ENCODE measurements at regions of chr1 and their contacts with region 1.

Region 1: DNA sequence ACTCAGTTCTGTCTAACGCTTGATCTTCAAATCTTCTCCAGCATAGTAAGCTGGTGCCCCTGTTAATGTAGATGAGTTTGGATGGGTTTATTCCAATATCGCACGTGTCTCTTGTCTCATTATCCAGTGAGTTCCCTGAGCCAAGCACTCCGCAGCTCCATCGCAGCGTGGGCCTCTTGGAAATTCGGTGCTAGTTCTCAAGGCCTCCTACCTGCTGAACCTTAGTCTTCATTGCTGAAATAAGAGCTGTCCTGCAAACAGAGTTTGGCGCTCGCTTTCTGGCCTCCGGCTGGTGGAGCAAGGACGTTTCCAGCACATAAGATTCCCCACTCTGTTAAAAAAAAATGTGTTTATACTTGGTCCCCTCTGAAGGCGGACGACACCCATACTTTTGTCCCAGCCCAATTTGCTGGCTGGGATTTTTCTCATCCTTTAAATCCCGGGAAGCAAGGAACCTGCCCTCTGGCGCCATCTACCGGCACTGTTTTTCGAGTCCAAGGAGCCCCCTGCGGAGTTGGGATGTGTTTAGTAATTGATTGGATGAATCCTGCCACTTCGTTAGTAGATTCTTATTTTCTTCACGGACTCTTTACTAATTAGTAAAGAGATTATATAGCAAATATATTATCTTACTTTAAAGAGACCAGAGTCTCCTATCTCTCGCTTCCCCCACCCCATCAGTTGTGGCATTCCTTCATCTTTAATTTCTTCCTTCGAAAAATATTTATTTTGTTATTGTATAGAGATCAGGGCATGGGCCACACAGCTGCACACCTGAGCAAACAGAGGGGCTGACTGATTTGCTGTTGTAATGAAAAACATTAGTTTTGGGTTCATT is 14.7 kb downstream of the JUN start:
- DNase-seq: peak in 1 of 2 experiments; percentile 98
- H3K4me3 ChIP-seq: no peak overlapping the region
- H3K27ac ChIP-seq: no peak overlapping the region
- H3K4me1 ChIP-seq: peaks cover 0 to 3% (median under 1%) of the 10 kb centered on the region in 4 experiments; a peak in 1 of 7 replicates
- H3K27me3 ChIP-seq: no peaks in the 10 kb centered on the region
- CTCF ChIP-seq: peak; percentile 75 to 77 (median 75)
- EP300 ChIP-seq: no peak
- POLR2A ChIP-seq: no peak
- RAD21 ChIP-seq: peak; percentile 74 to 82

Region 2: GRCh38 chr1:58652651-58653184 is 116.5 kb before region 1 on chr1:
- CTCF ChIA-PET with region 1: no interaction called
- POLR2A ChIA-PET with region 1: no interaction called
- DNase-seq: no peak
- H3K4me3 ChIP-seq: no peak overlapping the region
- H3K27ac ChIP-seq: no peak overlapping the region
- H3K4me1 ChIP-seq: 0 out of 7 replicates have a peak, but pooled peaks cover 0 to 3% (median 0%) of the 10 kb centered on the region in 4 experiments
- H3K27me3 ChIP-seq: peaks cover 0 to 1% (median 0%) of the 10 kb centered on the region in 4 experiments; a peak in 1 of 7 replicates
- CTCF ChIP-seq: peak; percentile 31 to 88 (median 73)
- EP300 ChIP-seq: no peak
- POLR2A ChIP-seq: no peak
- RAD21 ChIP-seq: peak; percentile 91 to 95

Region 3: DNA sequence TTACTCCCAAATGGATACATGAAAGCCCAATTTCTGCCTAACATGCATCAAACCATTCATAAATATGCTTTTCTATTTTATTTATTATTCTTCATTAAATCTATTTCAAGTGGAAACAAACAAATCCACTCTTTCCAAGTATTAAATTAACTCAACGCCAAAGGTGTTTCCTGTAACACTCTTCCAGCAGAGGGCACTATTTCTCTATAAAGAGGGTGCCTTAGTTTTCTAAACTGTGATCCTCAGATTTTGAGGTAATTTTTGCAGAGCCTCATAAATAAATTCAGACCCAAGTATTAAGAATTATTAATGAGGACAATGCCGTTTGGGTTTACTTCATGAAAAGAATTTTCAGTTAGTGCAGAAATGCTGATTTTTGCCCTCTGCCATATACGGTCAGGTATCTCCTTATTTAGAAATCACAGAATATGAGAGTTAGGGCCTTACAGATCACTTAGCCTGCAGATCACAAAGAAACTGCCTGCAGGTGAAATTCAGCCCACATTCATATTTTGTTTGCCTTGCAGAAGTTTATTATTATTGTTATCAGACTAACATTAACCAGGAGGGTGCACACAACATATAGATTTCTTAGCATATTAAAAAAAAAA is 29.2 kb before region 1 on chr1:
- CTCF ChIA-PET with region 1: interaction called, 34 read pairs
- POLR2A ChIA-PET with region 1: no interaction called
- DNase-seq: no peak
- H3K4me3 ChIP-seq: no peak overlapping the region
- H3K27ac ChIP-seq: no peak overlapping the region
- H3K4me1 ChIP-seq: no peaks in the 10 kb centered on the region
- H3K27me3 ChIP-seq: no peaks in the 10 kb centered on the region
- CTCF ChIP-seq: peak in 2 of 3 experiments; percentile 43 to 57; a peak in 2 of 4 replicates
- EP300 ChIP-seq: no peak
- POLR2A ChIP-seq: no peak
- RAD21 ChIP-seq: peak; percentile 88 to 89

Region 4: GRCh38 chr1:58755468-58755872 is 13.7 kb before region 1 on chr1:
- CTCF ChIA-PET with region 1: interaction called, 21 read pairs
- POLR2A ChIA-PET with region 1: no interaction called
- DNase-seq: no peak
- H3K4me3 ChIP-seq: no peak overlapping the region
- H3K27ac ChIP-seq: no peak overlapping the region
- H3K4me1 ChIP-seq: no peaks in the 10 kb centered on the region
- H3K27me3 ChIP-seq: no peaks in the 10 kb centered on the region
- CTCF ChIP-seq: no peak
- EP300 ChIP-seq: no peak
- POLR2A ChIP-seq: no peak
- RAD21 ChIP-seq: no peak

Region 5: DNA sequence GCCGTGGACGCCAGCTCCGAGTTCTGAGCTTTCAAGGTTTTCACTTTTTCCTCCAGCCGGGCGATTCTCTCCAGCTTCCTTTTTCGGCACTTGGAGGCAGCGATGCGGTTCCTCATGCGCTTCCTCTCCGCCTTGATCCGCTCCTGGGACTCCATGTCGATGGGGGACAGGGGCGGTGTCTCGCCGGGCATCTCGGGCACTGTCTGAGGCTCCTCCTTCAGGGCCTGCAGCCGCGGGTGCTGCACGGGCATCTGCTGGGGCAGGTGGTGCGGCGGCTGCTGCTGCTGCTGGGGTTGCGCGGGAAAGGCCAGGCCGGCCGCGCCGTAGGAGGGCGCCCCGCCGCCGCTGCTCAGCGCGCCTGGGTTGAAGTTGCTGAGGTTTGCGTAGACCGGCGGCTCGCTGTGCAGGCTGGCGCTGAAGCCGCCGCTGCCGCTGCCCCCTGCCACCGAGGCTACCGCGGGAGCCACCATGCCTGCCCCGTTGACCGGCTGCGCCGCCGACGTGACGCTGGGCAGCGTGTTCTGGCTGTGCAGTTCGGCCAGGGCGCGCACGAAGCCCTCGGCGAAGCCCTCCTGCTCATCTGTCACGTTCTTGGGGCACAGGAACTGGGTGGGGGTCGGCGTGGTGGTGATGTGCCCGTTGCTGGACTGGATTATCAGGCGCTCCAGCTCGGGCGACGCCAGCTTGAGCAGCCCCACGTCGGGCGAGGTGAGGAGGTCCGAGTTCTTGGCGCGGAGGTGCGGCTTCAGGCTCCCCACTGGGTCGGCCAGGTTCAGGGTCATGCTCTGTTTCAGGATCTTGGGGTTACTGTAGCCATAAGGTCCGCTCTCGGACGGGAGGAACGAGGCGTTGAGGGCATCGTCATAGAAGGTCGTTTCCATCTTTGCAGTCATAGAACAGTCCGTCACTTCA is 13.2 kb after region 1 on chr1:
- CTCF ChIA-PET with region 1: interaction called, 12 read pairs
- POLR2A ChIA-PET with region 1: interaction called, 9 read pairs
- DNase-seq: peak in 1 of 2 experiments; percentile 78
- H3K4me3 ChIP-seq: peak overlapping the region; percentile 54 to 75 (median 66)
- H3K27ac ChIP-seq: no peak overlapping the region
- H3K4me1 ChIP-seq: peaks cover 0 to 15% (median 2%) of the 10 kb centered on the region in 4 experiments; a peak in 5 of 7 replicates
- H3K27me3 ChIP-seq: peaks cover 7 to 37% (median 22%) of the 10 kb centered on the region in 4 experiments; a peak in 6 of 7 replicates
- CTCF ChIP-seq: no peak
- EP300 ChIP-seq: no peak
- POLR2A ChIP-seq: peak in 1 of 2 experiments; percentile 9; a peak in 2 of 3 replicates
- RAD21 ChIP-seq: peak in 1 of 2 experiments; percentile 39; a peak in 1 of 4 replicates

Region 6: DNA sequence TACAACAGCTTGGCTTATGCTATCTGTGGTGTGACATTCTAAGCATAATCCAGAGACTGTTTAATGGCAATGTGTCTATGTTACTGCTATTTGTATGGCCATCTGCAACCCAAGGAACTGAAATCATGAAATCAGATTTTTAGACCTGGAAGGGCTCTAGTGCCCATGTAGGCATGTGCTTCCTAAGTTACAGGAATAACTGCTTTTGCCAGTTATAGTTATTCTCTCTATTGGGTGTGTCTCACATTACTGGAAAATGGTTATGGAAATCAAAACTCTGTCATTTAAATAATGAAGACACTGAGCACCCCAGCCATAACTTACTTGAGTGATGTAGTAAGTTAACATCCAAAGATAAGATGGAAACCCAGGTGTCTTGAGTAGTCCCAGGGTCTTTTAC is 27.2 kb after region 1 on chr1:
- CTCF ChIA-PET with region 1: no interaction called
- POLR2A ChIA-PET with region 1: no interaction called
- DNase-seq: no peak
- H3K4me3 ChIP-seq: no peak overlapping the region
- H3K27ac ChIP-seq: no peak overlapping the region
- H3K4me1 ChIP-seq: peaks cover 0 to 3% (median 0%) of the 10 kb centered on the region in 4 experiments; a peak in 1 of 7 replicates
- H3K27me3 ChIP-seq: no peaks in the 10 kb centered on the region; a peak in 1 of 7 replicates
- CTCF ChIP-seq: no peak
- EP300 ChIP-seq: no peak
- POLR2A ChIP-seq: no peak
- RAD21 ChIP-seq: no peak

Region 7: DNA sequence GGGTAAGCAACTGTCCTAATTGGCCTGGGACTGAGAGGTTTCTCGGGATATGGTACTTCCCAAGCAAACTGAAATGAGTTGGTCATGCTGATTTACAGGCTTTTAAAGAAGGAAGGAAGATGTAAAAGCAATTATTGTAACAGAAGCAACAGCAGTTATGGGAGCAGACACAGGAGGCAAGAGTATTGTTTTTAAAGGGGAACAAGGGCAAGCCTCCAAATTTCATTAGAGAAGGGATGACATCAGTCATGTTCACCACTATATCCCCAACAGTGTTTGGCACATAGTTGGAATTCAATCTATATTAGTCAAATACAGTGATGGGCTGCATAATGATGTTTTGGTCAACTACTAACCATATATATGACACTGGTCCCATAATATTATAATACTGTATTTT is 60.7 kb after region 1 on chr1:
- CTCF ChIA-PET with region 1: no interaction called
- POLR2A ChIA-PET with region 1: no interaction called
- DNase-seq: no peak
- H3K4me3 ChIP-seq: no peak overlapping the region
- H3K27ac ChIP-seq: no peak overlapping the region
- H3K4me1 ChIP-seq: no peaks in the 10 kb centered on the region
- H3K27me3 ChIP-seq: no peaks in the 10 kb centered on the region
- CTCF ChIP-seq: no peak
- EP300 ChIP-seq: no peak
- POLR2A ChIP-seq: no peak
- RAD21 ChIP-seq: no peak

Region 8: GRCh38 chr1:58883037-58883887 is 114.1 kb after region 1 on chr1:
- CTCF ChIA-PET with region 1: no interaction called
- POLR2A ChIA-PET with region 1: no interaction called
- DNase-seq: no peak
- H3K4me3 ChIP-seq: no peak overlapping the region
- H3K27ac ChIP-seq: no peak overlapping the region
- H3K4me1 ChIP-seq: no peaks in the 10 kb centered on the region
- H3K27me3 ChIP-seq: no peaks in the 10 kb centered on the region
- CTCF ChIP-seq: no peak
- EP300 ChIP-seq: no peak
- POLR2A ChIP-seq: no peak
- RAD21 ChIP-seq: no peak